ENCODE measurements at regions of chr12 and their contacts with region 1.

Region 1: DNA sequence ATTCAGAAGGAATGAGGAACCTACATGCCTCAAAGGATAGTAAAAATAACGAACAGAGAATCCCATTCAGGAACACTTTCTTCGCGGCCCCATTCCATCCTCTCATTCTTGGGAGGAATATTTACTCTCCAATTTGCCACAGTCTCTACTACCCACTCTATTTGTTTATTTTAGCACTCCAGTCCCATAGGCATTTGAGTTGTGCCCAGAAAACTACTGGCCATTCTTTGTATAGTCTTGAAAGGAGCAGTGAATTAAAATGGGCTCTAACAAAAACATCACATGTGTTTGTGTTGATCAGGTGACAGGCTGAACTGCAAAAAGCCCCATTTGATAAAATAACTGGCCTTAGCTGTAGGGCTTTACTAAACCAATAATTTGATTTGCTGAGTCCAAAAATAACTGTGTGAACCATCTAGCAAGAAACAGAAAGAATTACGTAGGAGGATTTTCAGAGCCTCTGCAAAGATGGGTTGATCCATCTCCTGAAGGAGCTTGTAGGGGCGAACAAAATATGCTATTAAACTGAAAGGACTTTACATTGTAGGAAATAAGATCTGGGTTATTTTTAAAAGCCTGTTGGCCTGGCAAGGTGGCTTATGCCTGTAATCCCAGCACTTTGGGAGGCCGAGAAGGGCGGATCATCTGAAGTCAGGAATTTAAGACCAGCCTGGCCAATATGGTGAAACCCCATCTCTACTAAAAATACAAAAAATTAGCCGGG is 142.3 kb upstream of the CPNE8 start:
- DNase-seq: no peak
- H3K4me3 Mint-ChIP-seq: no peak overlapping the region
- H3K27ac Mint-ChIP-seq: no peak overlapping the region
- H3K4me1 Mint-ChIP-seq: no peaks in the 10 kb centered on the region
- H3K27me3 Mint-ChIP-seq: no peaks in the 10 kb centered on the region
- CTCF ChIP-seq: no peak

Region 2: DNA sequence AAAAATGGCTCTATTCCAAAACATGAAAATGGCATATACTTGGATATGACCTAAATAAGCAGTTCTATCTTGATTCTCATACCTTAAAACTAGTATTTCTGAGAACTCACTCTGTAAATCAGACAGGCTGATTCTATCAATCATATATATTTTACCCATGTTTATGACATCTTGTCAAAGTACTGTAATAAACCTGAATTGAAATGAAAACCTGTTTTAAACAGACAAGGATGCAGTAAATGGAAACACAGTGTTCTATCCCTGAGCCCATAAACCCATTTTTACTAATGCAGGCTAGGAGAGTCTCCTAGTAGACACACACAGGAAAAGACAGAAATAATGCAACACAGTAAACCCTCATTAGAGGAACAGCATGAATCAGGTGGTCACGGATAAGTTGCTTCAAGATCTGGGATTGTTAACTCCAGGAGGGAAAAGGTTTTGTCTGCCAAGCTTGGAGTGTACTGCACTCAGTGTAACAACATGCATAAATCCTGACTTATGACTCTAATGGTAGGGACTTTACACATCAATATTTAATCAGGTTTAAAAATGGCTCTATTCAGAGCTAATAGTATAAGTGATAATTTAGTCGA is 48.7 kb before region 1 on chr12:
- CTCF ChIA-PET with region 1: no interaction called
- intact Hi-C with region 1: loop called (anchors 5 kb)
- DNase-seq: no peak
- H3K4me3 Mint-ChIP-seq: no peak overlapping the region
- H3K27ac Mint-ChIP-seq: no peak overlapping the region
- H3K4me1 Mint-ChIP-seq: no peaks in the 10 kb centered on the region
- H3K27me3 Mint-ChIP-seq: no peaks in the 10 kb centered on the region
- CTCF ChIP-seq: no peak

Region 3: GRCh38 chr12:39230086-39230485 is 182.4 kb after region 1 on chr12:
- CTCF ChIA-PET with region 1: no interaction called
- intact Hi-C with region 1: no loop called
- DNase-seq: no peak
- H3K4me3 Mint-ChIP-seq: no peak overlapping the region
- H3K27ac Mint-ChIP-seq: no peak overlapping the region
- H3K4me1 Mint-ChIP-seq: no peaks in the 10 kb centered on the region
- H3K27me3 Mint-ChIP-seq: no peaks in the 10 kb centered on the region
- CTCF ChIP-seq: no peak

Measured in Calu3 (cell line).